ENCODE measurements at regions of chr6 and their contacts with region 1.

Region 1: DNA sequence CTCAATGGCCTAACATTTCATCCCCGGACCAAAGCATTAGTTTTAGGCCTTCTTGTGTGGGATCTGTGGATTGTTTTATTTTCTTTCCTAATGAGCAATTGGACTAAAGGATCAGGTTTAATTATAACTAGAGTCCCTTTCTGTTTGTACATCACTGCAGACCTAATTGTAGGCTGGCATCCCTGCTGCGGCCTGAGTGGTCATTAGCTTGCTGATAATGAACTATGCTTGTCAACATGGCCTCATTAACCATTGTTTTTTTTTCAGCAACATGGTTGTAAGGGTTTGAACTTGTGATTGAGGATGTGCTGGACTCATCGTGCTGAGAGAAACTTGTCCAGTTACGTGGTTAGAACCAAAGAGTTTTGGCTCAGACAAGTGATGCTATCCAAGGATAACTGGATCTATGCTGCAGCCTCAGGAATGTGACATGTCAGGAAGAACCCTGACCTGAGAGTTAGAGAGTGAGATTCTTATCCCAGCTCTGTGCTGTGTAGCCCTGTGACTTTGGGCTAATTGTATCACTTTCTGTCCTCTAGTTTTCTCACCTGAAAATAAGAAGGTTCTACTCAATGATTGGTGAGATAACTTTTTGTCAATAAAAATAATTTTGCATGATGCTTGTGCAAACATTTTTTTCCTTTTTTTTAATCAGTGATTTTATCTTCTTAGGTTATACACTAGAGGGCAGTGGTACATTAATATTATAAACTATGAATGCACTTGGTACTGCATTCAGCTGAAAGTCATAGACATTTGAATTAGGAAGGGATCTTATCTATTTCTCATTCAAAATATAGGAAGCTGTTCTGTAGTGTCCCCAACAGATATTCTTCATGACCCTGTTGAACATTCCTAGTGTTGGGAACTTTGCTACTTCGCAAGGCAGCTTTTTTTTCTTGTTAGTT is 140.9 kb downstream of the RNF144B start:
- DNase-seq: peak; percentile 24
- H3K4me3 Mint-ChIP-seq: no peak overlapping the region
- H3K27ac Mint-ChIP-seq: no peak overlapping the region
- H3K4me1 Mint-ChIP-seq: no peaks in the 10 kb centered on the region
- H3K27me3 Mint-ChIP-seq: peaks cover 27% of the 10 kb centered on the region
- CTCF ChIP-seq: peak; percentile 41

Region 2: GRCh38 chr6:18515767-18516166 is 12.3 kb before region 1 on chr6:
- CTCF ChIA-PET with region 1: interaction called, 10 read pairs
- POLR2A ChIA-PET with region 1: no interaction called
- intact Hi-C with region 1: no loop called
- DNase-seq: no peak
- H3K4me3 Mint-ChIP-seq: no peak overlapping the region
- H3K27ac Mint-ChIP-seq: no peak overlapping the region
- H3K4me1 Mint-ChIP-seq: no peaks in the 10 kb centered on the region
- H3K27me3 Mint-ChIP-seq: no peaks in the 10 kb centered on the region
- CTCF ChIP-seq: no peak

Region 3: DNA sequence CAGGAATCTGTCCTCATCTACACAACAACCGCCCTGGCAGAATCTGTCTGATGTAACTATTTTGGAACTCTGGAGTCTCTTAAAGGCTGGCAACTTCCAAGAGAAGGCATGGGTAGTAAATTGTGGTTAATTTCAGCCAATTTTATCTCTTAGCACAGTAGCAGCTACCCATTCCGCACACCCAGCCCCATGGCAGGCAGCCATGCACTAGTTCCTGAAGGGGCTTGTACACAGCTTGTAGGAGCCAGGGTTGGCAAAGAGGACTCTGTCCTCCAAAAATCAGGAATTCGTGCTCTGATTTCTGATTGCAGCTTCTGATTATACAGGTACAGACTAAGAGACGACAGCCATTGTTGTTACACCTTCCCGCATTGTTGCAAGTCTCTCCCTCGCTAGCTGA is 15.0 kb after region 1 on chr6:
- CTCF ChIA-PET with region 1: interaction called, 20 read pairs
- POLR2A ChIA-PET with region 1: interaction called, 5 read pairs
- intact Hi-C with region 1: no loop called
- DNase-seq: no peak
- H3K4me3 Mint-ChIP-seq: no peak overlapping the region
- H3K27ac Mint-ChIP-seq: no peak overlapping the region
- H3K4me1 Mint-ChIP-seq: no peaks in the 10 kb centered on the region
- H3K27me3 Mint-ChIP-seq: peaks cover 71% of the 10 kb centered on the region
- CTCF ChIP-seq: no peak

Region 4: GRCh38 chr6:18823782-18824386 is 295.8 kb after region 1 on chr6:
- CTCF ChIA-PET with region 1: no interaction called
- POLR2A ChIA-PET with region 1: no interaction called
- intact Hi-C with region 1: loop called (anchors 5 kb)
- DNase-seq: peak; percentile 56
- H3K4me3 Mint-ChIP-seq: no peak overlapping the region
- H3K27ac Mint-ChIP-seq: no peak overlapping the region
- H3K4me1 Mint-ChIP-seq: no peaks in the 10 kb centered on the region
- H3K27me3 Mint-ChIP-seq: peaks cover 15% of the 10 kb centered on the region
- CTCF ChIP-seq: peak; percentile 62